ENCODE measurements at regions of chr15 and their contacts with region 1.

Region 1: DNA sequence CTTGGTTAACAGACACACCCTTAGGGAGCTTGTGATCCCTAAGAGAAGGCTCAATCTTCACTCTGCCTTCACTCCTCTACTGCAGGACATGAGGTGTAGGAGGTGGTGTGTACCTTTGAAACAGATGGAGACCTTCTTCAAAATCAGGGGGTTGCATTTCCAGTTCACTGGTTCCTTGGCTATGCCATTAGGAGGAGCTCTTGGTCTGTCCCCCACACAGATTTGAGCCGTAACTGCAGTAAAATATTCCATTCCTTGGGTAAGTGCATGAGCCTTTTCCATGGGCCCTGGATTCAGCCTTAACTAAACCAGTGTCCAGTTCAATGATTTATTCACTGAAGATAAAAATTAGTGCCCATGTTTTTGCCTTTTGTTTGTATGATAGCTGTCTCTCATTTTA is 144.6 kb downstream of the MCTP2 start:
- DNase-seq: no peak
- ATAC-seq: no peak
- H3K4me3 ChIP-seq: no peak overlapping the region
- H3K27ac ChIP-seq: no peak overlapping the region
- H3K4me1 ChIP-seq: peaks cover 0 to 6% (median 0%) of the 10 kb centered on the region in 12 donors
- H3K27me3 ChIP-seq: peaks cover 0 to 7% (median 0%) of the 10 kb centered on the region in 9 donors
- CTCF ChIP-seq: peak in 7 of 12 donors; percentile 12 to 28 (median 24)
- POLR2A ChIP-seq: no peak

Region 2: DNA sequence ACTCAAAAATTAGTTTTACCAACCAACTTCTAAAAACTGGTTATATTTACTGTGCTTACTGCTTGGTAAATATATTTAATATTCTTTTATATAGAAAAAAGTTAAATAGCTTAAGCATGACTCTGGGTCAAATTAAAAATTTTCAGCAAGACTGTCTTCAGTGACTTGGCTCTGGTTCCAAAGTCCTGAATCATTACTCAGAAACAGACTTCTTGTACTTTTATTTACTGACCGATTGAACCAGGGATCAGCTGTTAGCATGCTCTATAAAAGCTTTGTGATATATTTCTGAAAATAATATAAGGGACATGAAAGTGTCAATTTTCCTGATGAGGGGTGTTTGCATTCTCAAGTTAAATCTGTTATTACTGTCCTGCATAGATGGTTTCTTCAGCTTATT is 19.6 kb after region 1 on chr15:
- intact Hi-C with region 1: no loop called
- DNase-seq: no peak
- ATAC-seq: no peak
- H3K4me3 ChIP-seq: no peak overlapping the region
- H3K27ac ChIP-seq: no peak overlapping the region
- H3K4me1 ChIP-seq: peaks cover 0 to 3% (median 0%) of the 10 kb centered on the region in 12 donors
- H3K27me3 ChIP-seq: peaks cover 0 to 3% (median 0%) of the 10 kb centered on the region in 9 donors
- CTCF ChIP-seq: no peak
- POLR2A ChIP-seq: no peak

Region 3: DNA sequence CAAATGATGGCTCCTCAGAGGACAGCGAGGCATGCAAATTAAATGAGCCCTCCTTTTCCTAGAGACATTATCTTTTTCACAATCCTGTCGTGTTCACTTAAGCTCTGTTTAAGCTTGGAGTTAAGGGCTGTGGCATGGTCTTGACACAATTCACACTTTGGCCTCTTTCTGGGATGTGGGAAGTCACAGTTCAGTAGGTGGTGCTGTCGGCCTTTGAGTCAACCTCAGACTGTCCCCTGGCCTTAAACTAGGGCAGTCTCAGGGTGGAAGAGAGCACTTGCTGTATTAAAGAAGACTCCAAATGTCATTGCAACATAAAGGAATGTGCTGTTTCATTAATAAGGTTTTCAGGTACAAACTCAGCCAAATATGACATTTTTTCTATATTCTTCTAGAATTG is 206.4 kb after region 1 on chr15:
- intact Hi-C with region 1: loop called in 1 of 10 experiments (anchors 10 kb)
- DNase-seq: peak in 2 of 5 donors; percentile 19 to 33
- ATAC-seq: peak; percentile 54 to 74 (median 71)
- H3K4me3 ChIP-seq: no peak overlapping the region
- H3K27ac ChIP-seq: no peak overlapping the region
- H3K4me1 ChIP-seq: peaks cover 0 to 16% (median 0%) of the 10 kb centered on the region in 12 donors
- H3K27me3 ChIP-seq: peaks cover 0 to 33% (median 0%) of the 10 kb centered on the region in 9 donors
- CTCF ChIP-seq: peak in 11 of 12 donors; percentile 18 to 55 (median 33)
- POLR2A ChIP-seq: no peak

Measured in heart left ventricle (tissue), 16 donors.